Activated CD8-positive, alpha-beta T cell treated with anti-CD3 and anti-CD28 coated beads, Interleukin-2, amount 10 ng/mL, durations not matched to agents 7 days and 5 days (primary cell): ENCODE measurements at regions of chr20 and their contacts with region 1.

Region 1: GRCh38 chr20:49610701-49611538 is 43.0 kb upstream of the PTGIS start:
- DNase-seq: peak; percentile 83
- ATAC-seq: peak; percentile 72
- H3K4me3 Mint-ChIP-seq: peak overlapping the region; percentile 52
- H3K27ac Mint-ChIP-seq: peak overlapping the region; percentile 30
- H3K4me1 Mint-ChIP-seq: peaks cover 24% of the 10 kb centered on the region
- H3K27me3 Mint-ChIP-seq: no peaks in the 10 kb centered on the region

Region 2: DNA sequence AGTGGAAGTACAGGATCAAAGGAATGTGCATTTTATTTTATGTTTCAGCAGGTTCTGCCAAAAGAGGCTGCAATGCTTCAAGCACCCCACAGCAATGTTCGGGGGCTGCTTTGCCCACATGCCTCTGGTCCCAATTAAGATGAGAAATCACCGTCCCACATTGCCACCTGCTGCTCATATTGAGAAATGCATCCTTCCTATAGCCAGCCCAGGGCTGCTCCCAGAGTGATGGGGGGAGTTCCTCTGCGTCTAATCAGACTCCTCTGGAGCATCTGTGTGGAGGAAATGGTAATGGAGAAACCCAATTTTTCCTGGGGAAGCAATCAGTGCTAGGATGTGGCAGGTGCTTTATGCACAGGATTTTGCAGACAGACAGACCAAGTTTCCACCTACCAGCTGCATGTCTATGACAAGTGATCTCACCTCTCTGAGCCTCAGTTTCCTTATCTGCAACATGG is 76.6 kb before region 1 on chr20:
- CTCF ChIA-PET with region 1: interaction called, 459 read pairs
- POLR2A ChIA-PET with region 1: interaction called, 3 read pairs
- DNase-seq: peak; percentile 83
- ATAC-seq: peak; percentile 85
- H3K4me3 Mint-ChIP-seq: peak overlapping the region; percentile 34
- H3K27ac Mint-ChIP-seq: peak overlapping the region; percentile 81
- H3K4me1 Mint-ChIP-seq: peaks cover 21% of the 10 kb centered on the region
- H3K27me3 Mint-ChIP-seq: peaks cover 6% of the 10 kb centered on the region

Region 3: GRCh38 chr20:49549811-49550551 is 60.9 kb before region 1 on chr20:
- CTCF ChIA-PET with region 1: interaction called, 459 read pairs
- POLR2A ChIA-PET with region 1: no interaction called
- DNase-seq: no peak
- ATAC-seq: peak; percentile 33
- H3K4me3 Mint-ChIP-seq: no peak overlapping the region
- H3K27ac Mint-ChIP-seq: no peak overlapping the region
- H3K4me1 Mint-ChIP-seq: peaks cover 4% of the 10 kb centered on the region
- H3K27me3 Mint-ChIP-seq: peaks cover 8% of the 10 kb centered on the region

Region 4: GRCh38 chr20:49583669-49584417 is 27.1 kb before region 1 on chr20:
- CTCF ChIA-PET with region 1: interaction called, 18 read pairs
- POLR2A ChIA-PET with region 1: no interaction called
- DNase-seq: no peak
- ATAC-seq: no peak
- H3K4me3 Mint-ChIP-seq: no peak overlapping the region
- H3K27ac Mint-ChIP-seq: no peak overlapping the region
- H3K4me1 Mint-ChIP-seq: peaks cover 40% of the 10 kb centered on the region
- H3K27me3 Mint-ChIP-seq: peaks cover 2% of the 10 kb centered on the region

Region 5: DNA sequence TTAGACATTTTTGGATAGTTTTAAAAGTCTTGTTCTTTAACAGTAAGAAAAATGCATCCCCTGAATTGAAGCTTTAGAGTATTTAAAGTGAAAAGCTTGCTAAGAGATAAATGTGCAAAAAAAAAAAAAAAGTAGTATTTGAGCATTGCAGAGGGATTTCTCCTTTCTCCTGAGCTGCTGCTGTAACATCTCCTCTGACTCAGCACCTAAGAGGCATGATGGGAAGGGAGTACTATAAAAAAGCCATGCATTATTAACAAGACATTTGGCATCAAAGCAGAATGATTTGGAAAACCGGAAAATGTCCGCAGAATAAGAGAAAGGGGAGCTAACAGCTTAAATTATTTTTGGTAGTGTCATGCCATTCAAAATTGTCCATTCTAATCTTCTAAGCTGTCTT is 74.9 kb after region 1 on chr20:
- CTCF ChIA-PET with region 1: no interaction called
- POLR2A ChIA-PET with region 1: no interaction called
- DNase-seq: no peak
- ATAC-seq: no peak
- H3K4me3 Mint-ChIP-seq: no peak overlapping the region
- H3K27ac Mint-ChIP-seq: no peak overlapping the region
- H3K4me1 Mint-ChIP-seq: peaks cover 33% of the 10 kb centered on the region
- H3K27me3 Mint-ChIP-seq: no peaks in the 10 kb centered on the region

Region 6: DNA sequence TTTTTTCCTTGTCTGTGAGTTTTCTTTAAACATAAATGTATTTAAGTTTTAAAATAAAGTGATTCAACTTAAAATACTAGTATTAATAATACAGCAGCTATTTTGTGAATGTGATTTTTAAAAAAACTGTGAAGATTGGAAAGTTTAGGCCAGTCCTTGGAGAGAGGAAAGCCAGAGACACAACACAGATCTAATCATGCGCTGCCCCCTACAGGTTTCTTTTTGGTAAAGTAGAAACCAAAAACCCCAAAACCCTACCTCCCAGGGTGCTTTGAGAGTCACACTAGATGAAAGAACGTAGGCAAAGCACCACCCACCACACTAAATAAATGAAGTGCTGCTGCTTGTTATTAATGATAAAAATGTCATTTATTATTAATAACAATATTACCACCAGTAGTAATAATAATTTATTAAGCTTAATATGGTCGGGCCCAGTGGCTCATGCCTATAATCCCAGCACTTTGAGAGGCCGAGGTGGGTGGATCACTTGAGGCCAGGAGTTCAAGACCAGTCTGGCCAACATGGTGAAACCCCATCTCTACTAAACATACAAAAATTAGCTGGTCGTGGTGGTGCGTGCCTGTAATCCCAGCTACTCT is 235.4 kb after region 1 on chr20:
- CTCF ChIA-PET with region 1: interaction called, 155 read pairs
- POLR2A ChIA-PET with region 1: no interaction called
- DNase-seq: peak; percentile 76
- ATAC-seq: peak; percentile 85
- H3K4me3 Mint-ChIP-seq: no peak overlapping the region
- H3K27ac Mint-ChIP-seq: no peak overlapping the region
- H3K4me1 Mint-ChIP-seq: peaks cover 9% of the 10 kb centered on the region
- H3K27me3 Mint-ChIP-seq: no peaks in the 10 kb centered on the region

Region 7: GRCh38 chr20:50153485-50154377 is 542.8 kb after region 1 on chr20 and contains the start of gene PEDS1:
- CTCF ChIA-PET with region 1: no interaction called
- POLR2A ChIA-PET with region 1: no interaction called
- DNase-seq: peak; percentile 87
- ATAC-seq: peak; percentile 99
- H3K4me3 Mint-ChIP-seq: peak within 1 kb of the TSS; percentile 78
- H3K27ac Mint-ChIP-seq: peak within 1 kb of the TSS; percentile 84
- H3K4me1 Mint-ChIP-seq: peaks cover 43% of the 10 kb centered on the region
- H3K27me3 Mint-ChIP-seq: no peaks in the 10 kb centered on the region
- total RNA-seq, gene PEDS1: 28.7 to 30.2 TPM